K562 (cell line): ENCODE measurements at regions of chr3 and their contacts with region 1.

Region 1: DNA sequence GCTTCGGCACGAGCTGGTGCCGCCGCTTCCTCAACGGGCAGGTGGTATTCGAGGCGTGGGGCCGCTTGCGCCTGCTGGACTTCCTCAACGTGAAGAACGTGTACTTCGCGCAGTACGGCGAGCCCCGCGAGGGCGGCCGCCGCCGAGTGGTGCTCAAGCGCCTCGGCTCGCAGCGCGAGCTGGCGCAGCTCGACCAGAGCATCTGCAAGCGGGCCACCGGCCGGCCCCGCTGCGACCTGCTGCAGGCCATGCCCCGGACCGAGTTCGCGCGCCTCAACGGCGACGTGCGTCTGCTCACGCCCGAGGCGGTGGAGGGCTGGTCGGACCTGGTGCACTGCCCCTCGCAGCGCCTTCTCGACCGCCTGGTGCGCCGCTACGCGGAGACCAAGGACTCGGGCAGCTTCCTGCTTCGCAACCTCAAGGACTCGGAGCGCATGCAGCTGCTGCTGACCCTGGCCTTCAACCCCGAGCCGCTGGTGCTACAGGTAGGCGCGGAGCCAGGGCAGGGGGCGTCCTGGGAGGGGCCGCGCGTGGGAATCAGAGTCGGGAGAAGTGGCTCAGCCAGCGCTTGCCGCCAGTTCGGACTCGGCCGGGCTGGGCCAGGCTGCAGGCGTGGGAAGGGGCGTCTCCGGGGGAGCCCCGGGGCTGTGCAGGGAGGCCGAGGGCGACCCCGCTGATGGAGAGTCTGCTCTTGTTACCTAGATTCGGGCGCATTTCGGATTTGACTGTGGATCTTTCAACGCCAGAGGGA is 1.1 kb downstream of the DIPK2A start:
- DNase-seq: peak; percentile 21 to 77 (median 36)
- ATAC-seq: peak; percentile 57
- H3K4me3 ChIP-seq: peak overlapping the region; percentile 77
- H3K27ac ChIP-seq: peak overlapping the region; percentile 97
- H3K4me1 ChIP-seq: peaks cover 4 to 19% of the 10 kb centered on the region in 2 experiments; a peak in 4 of 5 replicates
- H3K27me3 ChIP-seq: no peaks in the 10 kb centered on the region
- CTCF ChIP-seq: peak; percentile 38 to 58 (median 49)
- EP300 ChIP-seq: no peak
- POLR2A ChIP-seq: no peak
- RAD21 ChIP-seq: no peak

Region 2: GRCh38 chr3:143565951-143566350 is 406.7 kb before region 1 on chr3:
- CTCF ChIA-PET with region 1: no interaction called
- POLR2A ChIA-PET with region 1: no interaction called
- in situ Hi-C with region 1: no loop called
- intact Hi-C with region 1: no loop called
- DNase-seq: no peak
- ATAC-seq: no peak
- H3K4me3 ChIP-seq: no peak overlapping the region
- H3K27ac ChIP-seq: no peak overlapping the region
- H3K4me1 ChIP-seq: peaks cover 0 to 17% of the 10 kb centered on the region in 2 experiments; a peak in 2 of 5 replicates
- H3K27me3 ChIP-seq: no peaks in the 10 kb centered on the region
- CTCF ChIP-seq: no peak
- EP300 ChIP-seq: no peak
- POLR2A ChIP-seq: no peak
- RAD21 ChIP-seq: no peak

Region 3: GRCh38 chr3:144018776-144019175 is 46.1 kb after region 1 on chr3:
- CTCF ChIA-PET with region 1: no interaction called
- POLR2A ChIA-PET with region 1: interaction called, 8 read pairs
- in situ Hi-C with region 1: no loop called
- intact Hi-C with region 1: loop called (anchors 5 kb)
- DNase-seq: no peak
- ATAC-seq: no peak
- H3K4me3 ChIP-seq: no peak overlapping the region
- H3K27ac ChIP-seq: no peak overlapping the region
- H3K4me1 ChIP-seq: peaks cover 0 to 17% of the 10 kb centered on the region in 2 experiments; a peak in 4 of 5 replicates
- H3K27me3 ChIP-seq: no peaks in the 10 kb centered on the region
- CTCF ChIP-seq: no peak
- EP300 ChIP-seq: no peak
- POLR2A ChIP-seq: no peak
- RAD21 ChIP-seq: no peak

Region 4: GRCh38 chr3:144109944-144110343 is 137.3 kb after region 1 on chr3:
- CTCF ChIA-PET with region 1: no interaction called
- POLR2A ChIA-PET with region 1: no interaction called
- in situ Hi-C with region 1: no loop called
- intact Hi-C with region 1: loop called (anchors 5 kb)
- DNase-seq: no peak
- ATAC-seq: peak; percentile 67
- H3K4me3 ChIP-seq: no peak overlapping the region
- H3K27ac ChIP-seq: no peak overlapping the region
- H3K4me1 ChIP-seq: peaks cover 0 to 3% of the 10 kb centered on the region in 2 experiments; a peak in 1 of 5 replicates
- H3K27me3 ChIP-seq: no peaks in the 10 kb centered on the region
- CTCF ChIP-seq: no peak
- EP300 ChIP-seq: no peak
- POLR2A ChIP-seq: no peak
- RAD21 ChIP-seq: no peak

Region 5: GRCh38 chr3:144287001-144287400 is 314.3 kb after region 1 on chr3:
- CTCF ChIA-PET with region 1: no interaction called
- POLR2A ChIA-PET with region 1: no interaction called
- in situ Hi-C with region 1: no loop called
- intact Hi-C with region 1: loop called (anchors 10 kb)
- DNase-seq: no peak
- ATAC-seq: no peak
- H3K4me3 ChIP-seq: no peak overlapping the region
- H3K27ac ChIP-seq: no peak overlapping the region
- H3K4me1 ChIP-seq: no peaks in the 10 kb centered on the region
- H3K27me3 ChIP-seq: no peaks in the 10 kb centered on the region
- CTCF ChIP-seq: no peak
- EP300 ChIP-seq: no peak
- POLR2A ChIP-seq: no peak
- RAD21 ChIP-seq: no peak

Region 6: DNA sequence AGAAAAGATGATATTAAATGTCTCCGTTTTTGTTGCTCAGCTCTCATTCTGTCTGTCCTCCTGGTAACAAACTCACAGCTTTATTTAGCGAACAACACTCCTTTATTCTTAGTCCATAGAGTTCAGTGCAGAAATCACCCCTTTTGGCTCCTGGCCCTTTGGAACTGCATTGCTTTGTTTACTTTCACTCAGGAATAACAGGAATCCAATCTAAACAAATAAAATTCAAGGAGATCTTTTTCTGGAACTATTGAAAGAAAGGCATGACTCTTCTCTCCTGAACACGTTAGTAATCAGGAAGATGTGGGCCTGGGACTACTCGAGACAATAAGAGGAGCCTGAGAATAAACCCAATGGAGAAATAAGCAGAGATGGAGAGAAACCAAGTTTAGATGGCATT is 408.2 kb after region 1 on chr3:
- CTCF ChIA-PET with region 1: no interaction called
- POLR2A ChIA-PET with region 1: no interaction called
- in situ Hi-C with region 1: no loop called
- intact Hi-C with region 1: no loop called
- DNase-seq: no peak
- ATAC-seq: no peak
- H3K4me3 ChIP-seq: no peak overlapping the region
- H3K27ac ChIP-seq: no peak overlapping the region
- H3K4me1 ChIP-seq: no peaks in the 10 kb centered on the region
- H3K27me3 ChIP-seq: no peaks in the 10 kb centered on the region
- CTCF ChIP-seq: no peak
- EP300 ChIP-seq: no peak
- POLR2A ChIP-seq: no peak
- RAD21 ChIP-seq: no peak